Aorta (tissue), 5 donors: ENCODE measurements at regions of chr9 and their contacts with region 1.

Region 1: DNA sequence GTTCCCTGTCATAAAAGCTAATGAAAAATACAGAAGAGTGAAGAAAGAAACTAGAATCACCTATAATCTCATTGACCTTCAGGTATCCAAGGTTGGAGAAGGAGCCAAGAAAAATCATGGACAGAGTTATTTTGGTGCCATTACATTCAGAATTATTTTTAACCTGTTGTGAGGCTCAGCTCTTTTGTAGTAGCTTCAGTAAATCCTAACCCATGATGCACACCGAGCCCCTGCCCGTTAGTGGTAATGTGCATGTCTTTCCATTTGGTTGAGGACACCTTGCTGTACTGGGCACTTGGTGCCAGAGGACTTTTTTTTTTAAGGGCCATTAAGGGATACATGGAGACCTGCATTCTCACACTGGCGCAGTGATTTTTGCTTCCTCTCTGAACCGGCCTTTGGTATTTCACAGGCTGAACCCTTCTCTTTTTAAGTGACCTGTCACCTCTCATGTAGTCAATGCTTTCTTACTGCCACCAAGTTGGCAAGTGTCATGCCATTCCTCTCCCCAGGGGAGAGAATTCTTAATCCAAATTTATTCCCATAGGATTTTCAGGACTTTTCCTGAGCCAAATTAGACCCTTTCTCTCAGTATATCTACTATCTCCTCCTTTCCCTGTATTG is 125.6 kb downstream of the SMARCA2 start:
- DNase-seq: no peak
- ATAC-seq: no peak
- H3K4me3 ChIP-seq: no peak overlapping the region
- H3K27ac ChIP-seq: no peak overlapping the region
- H3K4me1 ChIP-seq: peaks cover 6 to 14% of the 10 kb centered on the region in 2 donors
- H3K27me3 ChIP-seq: no peaks in the 10 kb centered on the region

Region 2: DNA sequence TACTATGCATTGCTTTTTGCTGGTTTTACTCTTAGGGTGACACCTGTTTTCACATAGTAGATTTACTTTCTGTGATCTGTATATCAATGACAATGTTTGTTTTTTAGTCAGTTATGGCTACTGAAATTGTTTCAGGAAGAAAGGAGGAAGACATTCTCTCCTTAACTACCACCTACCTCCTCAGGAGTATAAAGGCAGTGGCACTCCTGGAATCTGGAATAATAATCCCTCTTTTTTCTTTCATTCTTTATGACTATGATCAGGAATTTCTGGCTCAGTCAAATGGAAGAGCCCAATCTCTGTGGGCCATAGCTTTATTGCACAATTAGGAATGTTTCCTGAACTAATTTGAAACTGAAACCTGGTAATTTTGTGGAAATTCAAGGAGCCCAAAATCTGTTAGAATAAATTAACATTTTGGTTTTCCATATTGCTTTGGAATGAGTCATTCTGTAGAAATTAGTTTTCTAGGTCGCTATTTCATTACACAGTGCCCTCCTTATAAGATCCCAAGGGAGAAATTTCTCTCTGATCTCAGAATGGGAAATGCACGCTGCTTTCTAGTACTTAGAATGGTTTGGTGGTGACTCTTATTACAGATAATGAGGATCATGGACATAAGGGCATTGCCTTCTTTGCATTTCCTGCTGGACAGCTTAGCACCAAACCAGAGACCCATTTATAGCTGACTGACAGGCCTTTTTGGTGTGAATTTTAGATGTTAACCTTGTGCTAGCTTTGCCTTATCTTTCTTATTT is 385.5 kb after region 1 on chr9:
- intact Hi-C with region 1: no loop called
- DNase-seq: no peak
- ATAC-seq: no peak
- H3K4me3 ChIP-seq: no peak overlapping the region
- H3K27ac ChIP-seq: no peak overlapping the region
- H3K4me1 ChIP-seq: no peaks in the 10 kb centered on the region
- H3K27me3 ChIP-seq: no peaks in the 10 kb centered on the region

Region 3: DNA sequence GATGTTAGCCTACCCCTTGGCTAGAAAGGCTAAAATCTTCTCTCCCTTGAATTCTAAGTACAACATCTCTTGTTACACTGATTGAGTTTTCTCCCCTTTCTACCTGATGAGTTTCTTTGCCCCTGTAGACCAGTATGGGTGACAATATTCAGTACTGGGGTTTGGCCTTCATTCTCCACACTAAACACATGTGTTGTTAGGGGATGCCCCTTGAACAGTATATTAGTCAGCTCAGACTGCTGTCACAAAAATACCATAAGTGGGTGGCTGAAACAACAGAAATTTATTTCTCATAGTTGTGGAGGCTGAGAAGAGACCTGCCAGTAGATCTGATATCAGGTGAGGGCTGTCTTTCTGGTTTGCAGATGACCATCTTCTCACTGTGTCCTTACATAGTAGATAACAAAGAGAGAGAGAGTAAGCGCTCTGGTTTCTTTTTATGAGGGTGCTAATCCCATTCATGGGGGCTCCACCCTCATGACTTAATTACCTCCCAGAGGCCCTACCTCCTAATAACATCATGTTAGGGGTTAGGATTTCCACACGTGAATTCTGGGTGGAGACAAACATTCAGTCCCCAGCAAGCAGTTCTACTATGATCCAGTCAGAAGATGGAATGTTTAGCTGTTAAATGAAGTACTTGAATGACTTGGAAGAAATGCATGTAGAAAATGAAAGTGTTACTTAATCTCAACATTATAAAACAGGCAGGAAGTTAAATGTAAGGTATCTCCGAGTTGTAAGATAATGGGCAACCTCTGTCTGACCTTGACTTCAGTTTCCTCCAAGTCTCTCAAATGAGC is 498.4 kb after region 1 on chr9:
- intact Hi-C with region 1: loop called in 1 of 2 experiments (anchors 10 kb)
- DNase-seq: no peak
- ATAC-seq: no peak
- H3K4me3 ChIP-seq: no peak overlapping the region
- H3K27ac ChIP-seq: no peak overlapping the region
- H3K4me1 ChIP-seq: no peaks in the 10 kb centered on the region
- H3K27me3 ChIP-seq: no peaks in the 10 kb centered on the region